Panc1 (cell line): ENCODE measurements at regions of chr18 and their contacts with region 1.

Region 1: GRCh38 chr18:23032030-23032582 is 99.0 kb downstream of the RBBP8 start:
- DNase-seq: no peak
- ATAC-seq: peak; percentile 49
- H3K4me3 ChIP-seq: no peak overlapping the region
- H3K27ac ChIP-seq: peak overlapping the region; percentile 36
- H3K4me1 ChIP-seq: peaks cover 14% of the 10 kb centered on the region
- H3K27me3 ChIP-seq: no peaks in the 10 kb centered on the region
- CTCF ChIP-seq: no peak

Region 2: DNA sequence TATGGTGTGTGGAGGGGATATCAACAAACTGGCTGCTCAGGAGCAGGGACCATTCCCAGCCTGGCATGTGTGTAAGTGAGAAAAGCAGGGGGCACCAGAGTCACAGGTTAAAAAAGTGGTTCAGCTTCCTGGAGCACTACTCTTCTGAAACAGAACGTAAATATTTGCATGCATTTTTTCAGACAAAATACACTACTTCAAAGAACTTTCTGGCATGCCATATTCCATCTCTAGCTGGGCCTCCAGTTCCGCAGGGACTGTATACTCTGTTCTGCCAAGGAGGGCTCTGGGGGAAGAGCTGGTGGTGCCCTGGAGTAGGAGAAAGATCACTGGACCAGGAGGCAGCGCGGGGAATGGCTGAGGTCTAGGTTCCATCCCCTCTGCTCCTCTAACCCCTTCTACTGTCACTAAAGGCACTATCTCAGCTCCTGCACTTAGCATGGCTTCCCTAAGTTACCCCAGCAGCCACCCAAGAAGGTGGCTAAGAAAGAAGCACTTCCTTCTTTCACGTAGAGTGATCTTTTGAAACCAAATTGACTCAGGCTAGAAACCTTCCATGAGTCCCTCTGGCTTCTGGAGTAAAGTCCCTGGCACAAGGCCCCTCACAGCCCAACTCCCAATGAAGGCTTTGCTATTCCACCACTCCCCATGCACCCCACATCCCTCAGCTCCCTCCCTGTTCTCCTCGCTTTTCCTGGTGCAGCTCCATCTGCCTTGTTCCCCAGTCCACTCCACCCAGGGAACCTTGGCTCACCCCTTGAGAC is 45.6 kb after region 1 on chr18:
- CTCF ChIA-PET with region 1: interaction called, 13 read pairs
- POLR2A ChIA-PET with region 1: no interaction called
- in situ Hi-C with region 1: no loop called
- intact Hi-C with region 1: no loop called
- DNase-seq: no peak
- ATAC-seq: peak; percentile 89
- H3K4me3 ChIP-seq: no peak overlapping the region
- H3K27ac ChIP-seq: peak overlapping the region; percentile 60; the same call in 1 of the 2 replicates
- H3K4me1 ChIP-seq: peaks cover 19% of the 10 kb centered on the region
- H3K27me3 ChIP-seq: no peaks in the 10 kb centered on the region
- CTCF ChIP-seq: no peak

Region 3: DNA sequence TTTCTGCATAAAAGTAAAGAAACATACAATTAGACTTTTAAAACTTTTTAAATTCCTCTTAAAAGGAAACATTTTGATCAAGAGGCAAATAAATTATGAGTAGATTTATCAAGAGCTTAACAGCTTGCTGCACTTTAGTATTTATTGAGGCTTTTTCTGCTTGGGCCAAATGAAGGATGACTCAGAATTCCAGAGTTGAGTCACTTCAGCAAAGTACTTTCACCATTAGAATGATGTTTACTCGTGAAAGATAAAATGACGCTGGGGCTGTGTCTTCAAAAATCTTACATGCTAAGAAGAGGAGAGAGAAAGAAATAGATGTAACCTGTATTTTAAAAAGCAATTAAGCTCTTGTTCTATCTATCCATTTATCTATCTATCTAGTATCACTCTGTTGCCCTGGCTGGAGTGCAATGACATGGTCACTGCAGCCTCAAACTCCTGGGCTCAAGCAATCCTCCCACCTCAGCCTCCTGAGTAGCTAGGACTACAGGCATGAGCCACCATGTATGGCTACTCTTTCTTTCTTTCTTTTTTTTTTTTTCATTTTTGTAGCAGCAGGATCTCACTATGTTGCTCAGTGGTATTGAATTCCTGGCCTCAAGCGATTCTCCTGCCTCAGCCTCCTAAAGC is 345.7 kb after region 1 on chr18:
- CTCF ChIA-PET with region 1: interaction called, 11 read pairs
- POLR2A ChIA-PET with region 1: no interaction called
- in situ Hi-C with region 1: no loop called
- intact Hi-C with region 1: no loop called
- DNase-seq: peak; percentile 42
- ATAC-seq: peak; percentile 65
- H3K4me3 ChIP-seq: no peak overlapping the region
- H3K27ac ChIP-seq: peak overlapping the region; percentile 78
- H3K4me1 ChIP-seq: peaks cover 42% of the 10 kb centered on the region
- H3K27me3 ChIP-seq: no peaks in the 10 kb centered on the region
- CTCF ChIP-seq: no peak

Region 4: DNA sequence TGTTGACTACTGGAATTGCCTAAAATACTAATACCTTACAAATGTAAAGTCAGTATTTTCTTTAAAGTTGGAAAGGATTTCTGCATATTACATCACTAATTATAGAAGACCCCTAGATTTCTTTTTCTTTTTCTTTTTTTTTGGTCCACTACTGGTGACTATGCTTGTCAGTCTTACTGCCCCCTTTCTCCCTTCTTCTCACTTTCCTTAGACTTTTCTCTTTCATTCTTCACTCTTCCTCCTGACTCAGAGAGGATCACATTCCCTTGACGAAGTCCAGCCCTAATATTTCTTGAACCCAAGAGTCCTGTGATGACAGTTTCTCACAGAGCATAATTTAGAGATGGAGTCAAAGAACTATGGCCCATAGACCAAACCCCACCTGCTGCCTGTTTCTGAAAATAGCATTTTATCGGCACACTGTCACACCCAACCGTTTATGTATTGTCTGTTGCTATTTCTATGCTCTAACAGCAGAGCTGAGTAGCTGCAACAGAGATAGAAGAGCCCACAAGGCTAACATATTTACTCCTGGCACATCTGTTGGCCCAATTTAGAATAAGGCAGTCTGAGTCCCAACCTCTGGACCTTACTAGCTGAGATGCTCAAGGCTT is 380.4 kb after region 1 on chr18:
- CTCF ChIA-PET with region 1: interaction called, 8 read pairs
- POLR2A ChIA-PET with region 1: interaction called, 8 read pairs
- in situ Hi-C with region 1: no loop called
- intact Hi-C with region 1: loop called (anchors 5 kb)
- DNase-seq: no peak
- ATAC-seq: 0 out of 2 replicates have a peak, but pooled peaks have one; percentile 23
- H3K4me3 ChIP-seq: no peak overlapping the region
- H3K27ac ChIP-seq: peak overlapping the region; percentile 62; the same call in 1 of the 2 replicates
- H3K4me1 ChIP-seq: peaks cover 9% of the 10 kb centered on the region
- H3K27me3 ChIP-seq: no peaks in the 10 kb centered on the region
- CTCF ChIP-seq: no peak